Activated naive CD4-positive, alpha-beta T cell treated with anti-CD3 and anti-CD28 coated beads for 36 hours (primary cell): ENCODE measurements at regions of chr3 and their contacts with region 1.

Region 1: DNA sequence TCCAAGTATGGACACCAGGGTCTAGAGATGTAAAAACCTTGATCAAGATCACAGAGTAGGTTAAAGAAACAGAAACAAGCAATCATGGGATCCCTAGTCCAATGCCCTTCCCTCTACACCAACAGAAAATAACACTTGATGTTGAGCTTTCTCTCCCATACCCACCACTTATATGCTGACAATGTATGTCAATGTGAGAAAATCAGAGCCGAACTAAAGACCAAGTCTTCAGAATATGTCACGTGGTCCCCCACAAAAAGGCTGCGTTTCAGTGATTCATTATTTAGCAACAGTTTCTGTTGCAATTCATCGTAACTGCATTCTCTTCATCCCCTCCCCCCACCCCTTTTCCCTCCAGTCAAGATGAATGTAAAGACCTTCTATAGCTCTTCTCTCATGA is 278.9 kb upstream of the STT3B start:
- DNase-seq: peak; percentile 59
- H3K4me3 Mint-ChIP-seq: no peak overlapping the region
- H3K27ac Mint-ChIP-seq: peak overlapping the region; percentile 65
- H3K4me1 Mint-ChIP-seq: peaks cover 51% of the 10 kb centered on the region
- H3K27me3 Mint-ChIP-seq: no peaks in the 10 kb centered on the region

Region 2: GRCh38 chr3:30855400-30856292 is 398.1 kb before region 1 on chr3:
- CTCF ChIA-PET with region 1: no interaction called
- intact Hi-C with region 1: no loop called
- DNase-seq: no peak
- H3K4me3 Mint-ChIP-seq: no peak overlapping the region
- H3K27ac Mint-ChIP-seq: no peak overlapping the region
- H3K4me1 Mint-ChIP-seq: no peaks in the 10 kb centered on the region
- H3K27me3 Mint-ChIP-seq: no peaks in the 10 kb centered on the region

Region 3: GRCh38 chr3:31213869-31214486 is 39.8 kb before region 1 on chr3:
- CTCF ChIA-PET with region 1: interaction called, 5 read pairs
- intact Hi-C with region 1: loop called (anchors 1 kb)
- DNase-seq: peak; percentile 49
- H3K4me3 Mint-ChIP-seq: no peak overlapping the region
- H3K27ac Mint-ChIP-seq: peak overlapping the region; percentile 3
- H3K4me1 Mint-ChIP-seq: peaks cover 88% of the 10 kb centered on the region
- H3K27me3 Mint-ChIP-seq: no peaks in the 10 kb centered on the region

Region 4: GRCh38 chr3:31242026-31242960 is 11.5 kb before region 1 on chr3:
- CTCF ChIA-PET with region 1: interaction called, 3 read pairs
- intact Hi-C with region 1: loop called (anchors 1 kb)
- DNase-seq: peak; percentile 40
- H3K4me3 Mint-ChIP-seq: no peak overlapping the region
- H3K27ac Mint-ChIP-seq: no peak overlapping the region
- H3K4me1 Mint-ChIP-seq: peaks cover 32% of the 10 kb centered on the region
- H3K27me3 Mint-ChIP-seq: peaks cover 4% of the 10 kb centered on the region

Region 5: DNA sequence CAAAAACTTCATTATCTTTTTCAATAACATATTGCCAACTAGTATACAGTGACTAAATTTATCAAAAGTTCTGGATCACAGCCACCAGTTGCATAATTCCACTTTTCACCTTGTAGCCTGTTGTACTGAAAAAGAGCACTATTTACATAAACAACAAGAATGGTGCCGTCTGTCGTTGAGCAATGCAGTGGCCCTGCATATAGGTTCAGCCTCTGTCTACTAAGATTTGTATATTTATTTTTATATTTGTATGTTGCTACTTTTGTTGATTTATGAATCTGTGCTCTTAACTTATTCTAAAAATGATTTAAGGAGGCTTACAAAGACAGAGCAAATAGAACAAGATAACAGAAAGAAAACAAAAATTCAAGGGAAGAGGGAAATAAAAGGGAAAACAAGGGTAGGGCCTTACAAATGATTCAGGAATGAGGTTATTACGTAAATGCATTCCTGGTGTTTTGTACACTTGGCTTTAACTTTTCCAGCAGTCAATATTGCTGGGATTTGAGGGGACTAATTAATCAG is 21.3 kb after region 1 on chr3:
- CTCF ChIA-PET with region 1: no interaction called
- intact Hi-C with region 1: no loop called
- DNase-seq: no peak
- H3K4me3 Mint-ChIP-seq: no peak overlapping the region
- H3K27ac Mint-ChIP-seq: no peak overlapping the region
- H3K4me1 Mint-ChIP-seq: peaks cover 9% of the 10 kb centered on the region
- H3K27me3 Mint-ChIP-seq: no peaks in the 10 kb centered on the region

Region 6: DNA sequence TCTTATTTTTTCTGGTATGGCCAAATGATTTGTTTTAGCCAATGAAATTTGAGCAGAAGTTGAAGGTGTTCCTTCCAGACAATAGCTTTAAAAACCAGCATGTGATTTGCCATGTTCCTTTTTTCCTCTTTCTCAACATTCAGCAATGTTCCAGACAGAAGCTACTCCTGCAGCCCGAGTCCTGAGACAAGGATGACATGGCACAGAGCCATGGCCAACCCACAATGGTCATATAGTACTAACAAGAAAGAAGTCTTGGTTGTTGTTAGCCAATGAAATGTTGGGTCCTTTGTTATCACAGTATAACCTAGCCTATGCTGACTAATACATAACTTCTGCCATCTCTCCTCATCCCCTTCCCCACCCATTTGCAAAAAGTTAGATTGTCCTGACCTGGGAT is 67.8 kb after region 1 on chr3:
- CTCF ChIA-PET with region 1: no interaction called
- intact Hi-C with region 1: no loop called
- DNase-seq: no peak
- H3K4me3 Mint-ChIP-seq: no peak overlapping the region
- H3K27ac Mint-ChIP-seq: no peak overlapping the region
- H3K4me1 Mint-ChIP-seq: no peaks in the 10 kb centered on the region
- H3K27me3 Mint-ChIP-seq: no peaks in the 10 kb centered on the region

Region 7: DNA sequence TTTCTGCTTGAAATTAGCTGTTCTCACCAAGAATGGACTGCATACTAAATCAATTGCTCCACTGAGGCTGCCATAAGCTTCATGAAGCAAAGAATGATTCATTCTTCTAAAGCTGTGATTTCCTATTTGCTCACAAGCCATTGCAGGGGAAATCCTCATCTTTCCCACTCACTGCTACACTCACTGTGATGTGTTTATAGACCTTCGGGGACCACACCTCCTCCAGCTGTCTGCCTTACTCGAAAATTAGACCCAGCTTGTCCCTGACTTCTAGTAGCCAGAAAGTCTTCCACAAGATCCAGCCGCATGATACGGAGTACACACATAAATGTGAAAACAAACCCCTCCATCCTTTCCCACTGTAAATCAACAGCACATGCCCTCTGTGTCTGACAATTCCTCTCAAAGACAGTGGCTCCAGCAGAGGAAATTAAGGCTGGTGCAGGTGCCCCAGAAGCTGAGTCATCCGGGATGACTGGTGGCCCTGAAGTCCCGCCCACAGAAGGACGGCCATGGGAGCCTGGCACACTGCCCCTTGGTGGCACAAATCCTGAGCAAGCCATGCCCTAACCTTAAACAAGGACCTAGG is 450.9 kb after region 1 on chr3:
- CTCF ChIA-PET with region 1: no interaction called
- intact Hi-C with region 1: loop called (anchors 2 kb)
- DNase-seq: peak; percentile 74
- H3K4me3 Mint-ChIP-seq: peak overlapping the region; percentile 55
- H3K27ac Mint-ChIP-seq: peak overlapping the region; percentile 85
- H3K4me1 Mint-ChIP-seq: peaks cover 13% of the 10 kb centered on the region
- H3K27me3 Mint-ChIP-seq: peaks cover 7% of the 10 kb centered on the region

Region 8: DNA sequence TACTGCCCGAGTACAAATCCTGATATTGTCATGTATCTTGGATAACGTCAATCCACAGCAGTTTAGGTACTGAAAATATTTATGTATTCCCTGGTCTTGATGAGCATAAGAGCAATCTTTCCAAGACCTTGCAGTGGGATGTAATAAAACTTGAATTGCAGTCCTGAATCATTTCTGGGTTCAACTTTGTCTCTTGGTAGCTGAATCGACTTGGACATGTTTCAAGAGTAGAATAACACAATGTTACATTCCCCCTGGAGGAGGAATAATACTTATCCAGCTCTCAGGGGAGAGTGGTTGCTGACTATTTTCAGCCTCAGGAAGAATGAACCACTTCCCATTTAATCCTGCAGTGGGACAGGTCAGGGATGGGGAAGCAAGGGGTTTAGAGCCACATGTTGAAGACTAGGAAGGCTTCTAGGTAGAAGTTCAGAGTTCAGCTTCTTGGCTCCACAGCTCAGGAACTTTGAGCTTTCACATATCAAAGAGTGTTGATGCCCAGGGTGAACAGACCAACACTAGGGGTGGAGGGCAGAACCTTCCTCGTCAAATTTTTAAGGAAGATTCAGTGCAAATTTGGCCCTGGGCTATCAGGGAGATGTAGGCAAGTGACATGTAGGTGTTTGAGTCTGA is 809.3 kb after region 1 on chr3:
- CTCF ChIA-PET with region 1: no interaction called
- intact Hi-C with region 1: no loop called
- DNase-seq: no peak
- H3K4me3 Mint-ChIP-seq: no peak overlapping the region
- H3K27ac Mint-ChIP-seq: no peak overlapping the region
- H3K4me1 Mint-ChIP-seq: no peaks in the 10 kb centered on the region
- H3K27me3 Mint-ChIP-seq: no peaks in the 10 kb centered on the region